ENCODE measurements at regions of chr1 and their contacts with region 1.

Region 1: DNA sequence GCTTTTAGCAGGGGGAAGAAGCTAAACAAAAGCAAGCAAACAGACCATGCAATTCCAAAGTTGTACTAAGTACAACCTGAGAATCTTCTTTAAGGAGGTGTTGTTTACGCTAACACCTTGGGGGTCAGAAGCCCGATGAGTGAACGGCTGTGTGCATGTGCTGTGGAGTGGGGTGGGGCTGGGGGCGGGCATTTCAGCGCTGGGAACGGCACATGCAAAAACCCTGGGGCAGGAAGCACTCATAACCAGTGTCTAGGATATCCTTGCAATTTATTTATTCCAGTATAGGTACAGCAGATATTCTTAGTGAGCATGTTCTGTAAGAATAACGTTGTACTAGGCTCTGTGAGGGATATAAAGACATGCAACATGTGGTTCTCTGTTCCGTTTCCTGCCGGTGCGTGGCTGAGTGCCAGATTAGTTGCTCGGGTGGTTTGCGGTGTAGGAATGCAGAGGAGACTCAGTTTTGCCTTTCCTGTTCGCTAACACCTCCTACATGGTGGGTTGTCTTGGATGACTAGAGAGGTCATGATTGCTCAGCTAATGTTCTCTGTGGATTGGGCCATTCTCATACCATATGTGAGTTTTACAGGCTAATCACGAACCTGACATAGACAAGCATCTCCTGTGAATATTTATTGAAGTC is 3.7 kb downstream of the FASLG start:
- DNase-seq: peak; percentile 79
- H3K4me3 Mint-ChIP-seq: peak overlapping the region; percentile 96
- H3K27ac Mint-ChIP-seq: peak overlapping the region; percentile 89
- H3K4me1 Mint-ChIP-seq: peaks cover 81% of the 10 kb centered on the region
- H3K27me3 Mint-ChIP-seq: no peaks in the 10 kb centered on the region

Region 2: GRCh38 chr1:172269644-172270043 is 392.9 kb before region 1 on chr1:
- intact Hi-C with region 1: loop called (anchors 5 kb)
- DNase-seq: no peak
- H3K4me3 Mint-ChIP-seq: peak overlapping the region; percentile 43
- H3K27ac Mint-ChIP-seq: peak overlapping the region; percentile 82
- H3K4me1 Mint-ChIP-seq: peaks cover 64% of the 10 kb centered on the region
- H3K27me3 Mint-ChIP-seq: no peaks in the 10 kb centered on the region

Region 3: DNA sequence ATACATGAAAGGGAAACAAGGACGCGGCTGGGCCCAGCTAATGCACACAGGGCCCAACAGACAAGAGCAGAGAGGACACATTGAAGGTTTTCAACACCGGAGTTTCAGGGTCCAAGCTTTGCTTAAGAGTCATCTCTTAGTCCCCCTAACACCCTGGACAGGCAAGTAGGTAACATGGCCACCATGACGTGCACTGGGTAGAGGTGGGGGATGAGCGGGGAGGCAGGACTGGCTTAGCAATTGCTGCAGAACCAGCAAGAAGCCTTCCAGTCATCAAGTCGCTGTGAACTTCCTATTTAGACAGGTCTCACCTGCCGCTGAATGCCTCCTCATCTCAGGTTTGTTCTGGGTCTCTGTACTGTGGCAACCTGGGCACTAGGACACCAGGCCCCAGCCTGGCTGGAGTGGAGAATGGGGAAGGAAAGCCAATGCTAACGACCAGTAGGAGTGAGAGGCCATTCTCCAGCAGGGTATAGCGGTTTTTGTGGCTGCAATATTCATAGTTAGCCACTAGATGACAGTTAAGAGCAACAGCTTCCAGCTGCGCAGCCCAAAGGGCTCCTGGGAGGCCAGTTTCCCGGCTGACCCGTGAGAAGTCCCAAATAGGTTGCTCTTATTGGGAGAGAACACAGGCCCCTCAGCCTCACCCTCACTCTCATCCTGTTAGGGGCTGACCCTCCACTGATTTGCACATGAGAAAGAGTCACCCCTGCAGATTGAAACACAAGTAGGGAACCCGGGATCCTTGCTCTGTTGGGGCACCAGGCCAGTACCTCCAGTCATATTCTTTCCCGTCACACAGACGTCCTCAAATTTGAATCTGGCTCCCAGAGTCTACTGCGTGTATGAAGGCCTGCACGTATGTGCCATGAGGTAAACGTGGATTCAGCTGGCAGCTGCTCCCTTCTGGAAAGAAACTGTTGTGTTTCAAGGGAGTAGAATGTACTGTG is 212.7 kb before region 1 on chr1:
- intact Hi-C with region 1: loop called (anchors 1 kb)
- DNase-seq: peak; percentile 30
- H3K4me3 Mint-ChIP-seq: peak overlapping the region; percentile 43
- H3K27ac Mint-ChIP-seq: no peak overlapping the region
- H3K4me1 Mint-ChIP-seq: peaks cover 40% of the 10 kb centered on the region
- H3K27me3 Mint-ChIP-seq: peaks cover 2% of the 10 kb centered on the region

Region 4: DNA sequence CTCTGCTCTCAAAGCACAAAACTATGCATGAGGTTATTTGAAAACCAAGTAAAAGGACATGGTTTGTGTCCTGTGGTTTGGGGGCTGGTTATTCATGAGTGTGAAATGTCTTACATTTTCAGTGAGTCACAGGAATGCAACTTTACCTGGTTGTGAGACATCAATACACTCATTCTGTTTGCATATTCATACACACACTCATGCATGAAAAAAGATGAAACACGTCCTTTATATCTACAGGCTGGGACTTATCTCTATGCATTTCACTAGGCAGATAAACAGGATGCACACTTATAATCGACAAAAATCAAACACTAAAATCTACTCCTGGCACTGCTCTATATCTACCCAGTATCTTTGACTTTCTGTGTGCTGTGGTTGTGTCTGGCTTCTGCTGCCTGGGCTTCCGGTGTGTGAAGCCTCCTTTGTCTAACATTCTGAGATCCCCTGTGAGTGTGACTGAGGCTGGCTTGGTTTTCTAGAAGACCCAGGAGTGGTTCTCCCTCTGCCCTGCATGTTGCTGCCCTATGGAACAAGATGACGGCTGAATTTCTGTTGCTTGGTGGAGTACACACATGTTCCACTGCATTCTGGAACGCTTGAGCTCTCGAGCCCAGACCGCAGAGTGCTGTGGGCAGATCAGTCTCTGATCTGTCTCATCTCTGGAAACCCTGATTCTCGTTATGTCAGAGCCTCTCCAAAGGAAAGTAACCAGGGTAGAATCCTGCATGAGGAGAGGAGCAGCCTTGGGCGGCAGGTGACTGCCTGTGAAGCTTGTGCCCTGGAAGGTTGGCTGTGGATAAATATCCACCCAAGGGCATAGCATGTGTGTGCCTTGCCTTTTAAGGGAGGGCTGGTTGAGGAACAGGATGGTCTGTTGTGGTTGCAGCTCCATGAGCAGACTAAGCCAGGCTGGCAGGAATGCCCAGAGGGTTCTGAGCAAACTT is 23.4 kb before region 1 on chr1:
- intact Hi-C with region 1: loop called (anchors 1 kb)
- DNase-seq: peak; percentile 77
- H3K4me3 Mint-ChIP-seq: peak overlapping the region; percentile 62
- H3K27ac Mint-ChIP-seq: peak overlapping the region; percentile 99
- H3K4me1 Mint-ChIP-seq: peaks cover 75% of the 10 kb centered on the region
- H3K27me3 Mint-ChIP-seq: peaks cover 5% of the 10 kb centered on the region

Region 5: GRCh38 chr1:172708452-172708851 is 45.9 kb after region 1 on chr1:
- intact Hi-C with region 1: loop called (anchors 1 kb)
- DNase-seq: peak; percentile 53
- H3K4me3 Mint-ChIP-seq: peak overlapping the region; percentile 50
- H3K27ac Mint-ChIP-seq: peak overlapping the region; percentile 86
- H3K4me1 Mint-ChIP-seq: peaks cover 18% of the 10 kb centered on the region
- H3K27me3 Mint-ChIP-seq: no peaks in the 10 kb centered on the region

Region 6: GRCh38 chr1:172895050-172895460 is 232.5 kb after region 1 on chr1:
- intact Hi-C with region 1: loop called (anchors 1 kb)
- DNase-seq: peak; percentile 34
- H3K4me3 Mint-ChIP-seq: peak overlapping the region; percentile 28
- H3K27ac Mint-ChIP-seq: peak overlapping the region; percentile 7
- H3K4me1 Mint-ChIP-seq: peaks cover 42% of the 10 kb centered on the region
- H3K27me3 Mint-ChIP-seq: peaks cover 13% of the 10 kb centered on the region

Region 7: DNA sequence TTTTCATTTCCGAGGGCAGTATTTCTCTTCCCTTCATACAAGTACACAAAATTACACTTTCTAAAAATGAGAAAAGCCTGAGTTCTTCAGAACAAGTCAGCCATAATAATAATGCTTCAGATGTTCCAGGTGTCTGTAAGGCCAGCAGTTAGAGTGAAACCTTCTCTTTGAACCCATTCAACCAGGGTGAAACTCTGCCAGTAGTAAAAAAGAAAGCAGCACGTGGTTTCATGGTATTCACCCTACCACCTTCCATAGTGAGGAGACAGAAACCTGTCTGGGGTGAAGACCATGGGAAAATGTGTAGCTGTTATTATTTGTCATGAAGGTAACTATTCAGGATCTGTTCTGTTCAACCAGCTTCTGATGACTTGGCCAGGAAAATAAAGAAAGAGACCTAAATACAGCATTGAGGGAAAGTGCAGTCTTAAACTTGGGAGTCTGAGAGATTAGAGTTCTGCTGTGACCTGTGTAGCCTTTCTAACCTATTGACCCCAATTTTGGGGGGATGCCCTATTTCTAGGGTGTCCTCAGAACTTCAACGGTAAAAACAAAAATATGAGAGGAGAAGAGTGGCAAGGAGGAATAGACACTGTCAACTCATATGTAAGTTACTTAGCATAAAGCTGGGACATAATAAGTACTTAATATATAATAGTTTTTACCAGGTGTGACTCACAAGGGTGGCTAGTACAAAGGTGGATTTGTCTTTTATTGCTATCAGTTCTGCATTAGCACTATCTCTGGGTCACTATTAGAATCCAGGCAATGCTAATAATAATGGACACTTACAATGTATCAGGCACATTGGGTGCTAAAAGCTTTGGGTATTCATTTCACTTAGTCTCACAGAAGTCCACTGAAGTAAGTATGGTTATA is 614.6 kb after region 1 on chr1:
- intact Hi-C with region 1: no loop called
- DNase-seq: no peak
- H3K4me3 Mint-ChIP-seq: no peak overlapping the region
- H3K27ac Mint-ChIP-seq: no peak overlapping the region
- H3K4me1 Mint-ChIP-seq: peaks cover 11% of the 10 kb centered on the region
- H3K27me3 Mint-ChIP-seq: peaks cover 4% of the 10 kb centered on the region